ENCODE measurements at regions of chr15 and their contacts with region 1.

Region 1: DNA sequence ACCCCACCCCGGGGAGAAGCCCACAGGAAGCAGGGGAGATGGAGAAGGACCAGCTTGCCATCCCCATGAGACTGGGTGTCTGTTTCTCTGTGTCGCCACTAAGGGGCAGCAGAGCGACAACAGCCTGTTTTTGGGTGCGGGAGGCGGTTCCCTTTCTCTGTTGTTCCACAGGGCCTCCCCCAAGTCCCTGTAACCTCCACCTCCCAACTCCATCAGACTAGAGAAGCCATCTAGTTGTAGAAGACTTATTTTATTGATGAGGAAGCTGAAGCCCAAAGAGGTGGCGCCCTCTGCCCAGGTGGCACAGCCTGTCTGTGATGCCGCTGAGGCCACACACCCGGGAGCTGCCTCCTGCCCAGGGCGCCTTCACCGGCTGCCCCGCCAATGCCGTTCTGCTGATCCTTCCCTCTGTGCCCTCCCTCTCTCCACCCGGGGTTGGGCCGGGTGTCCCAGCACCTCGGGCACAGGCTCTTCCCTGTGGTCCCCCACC is 3.9 kb upstream of the CCDC9B start:
- DNase-seq: no peak
- H3K4me3 ChIP-seq: no peak overlapping the region
- H3K27ac ChIP-seq: peak overlapping the region; percentile 99
- H3K4me1 ChIP-seq: peaks cover 63% of the 10 kb centered on the region
- H3K27me3 ChIP-seq: no peaks in the 10 kb centered on the region
- CTCF ChIP-seq: peak; percentile 90

Region 2: DNA sequence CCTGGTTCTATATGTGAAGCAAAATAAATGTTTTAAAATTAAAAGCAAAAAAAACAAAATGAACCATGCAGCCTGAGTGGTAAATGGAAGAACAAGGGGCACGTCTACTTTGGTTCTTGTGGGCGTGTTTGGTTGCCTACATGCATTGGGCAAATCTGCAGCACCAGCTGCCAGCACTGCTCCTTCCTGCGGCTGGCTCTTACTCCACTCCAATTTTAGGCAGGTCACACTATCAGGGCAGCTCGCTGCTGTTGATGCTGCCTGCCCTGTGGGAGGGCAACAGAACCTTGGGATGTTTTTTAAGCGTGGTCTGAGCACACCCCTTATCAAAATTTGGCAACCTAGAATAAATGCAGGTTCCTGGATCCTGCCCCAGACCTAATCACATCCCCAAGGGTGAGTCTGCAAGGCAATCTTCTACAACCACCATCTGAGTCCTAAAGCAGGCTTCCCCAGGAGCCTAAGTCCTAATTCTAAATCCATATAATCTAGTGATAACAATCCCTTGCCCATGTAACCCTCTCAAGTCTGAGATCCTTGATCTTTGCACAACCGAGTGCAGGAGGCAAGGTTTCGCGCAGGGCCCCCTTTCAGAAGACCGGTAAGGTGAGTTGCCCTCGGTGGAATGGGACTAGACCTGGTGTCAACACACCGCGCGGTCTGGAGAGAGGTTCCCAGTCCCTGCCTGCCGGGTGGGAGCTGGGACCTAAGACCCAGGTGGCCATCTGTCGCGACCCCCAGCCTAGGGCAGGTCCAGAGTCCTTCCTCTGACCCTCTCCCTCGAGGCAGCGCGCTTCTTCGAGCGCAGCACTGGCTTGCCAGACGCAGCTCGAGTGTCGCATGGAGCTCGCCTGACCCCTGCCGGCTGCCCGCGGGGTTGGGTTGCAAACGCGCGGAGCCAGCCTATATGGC is 76.8 kb after region 1 on chr15:
- intact Hi-C with region 1: loop called (anchors 10 kb)
- DNase-seq: peak; percentile 76
- H3K4me3 ChIP-seq: peak overlapping the region; percentile 32
- H3K27ac ChIP-seq: peak overlapping the region; percentile 76
- H3K4me1 ChIP-seq: peaks cover 23% of the 10 kb centered on the region
- H3K27me3 ChIP-seq: no peaks in the 10 kb centered on the region
- CTCF ChIP-seq: peak; percentile 96

Measured in left ventricle myocardium inferior (tissue), 1 donor.